CD8-positive, alpha-beta T cell (primary cell): ENCODE measurements at regions of chr7 and their contacts with region 1.

Region 1: GRCh38 chr7:696812-697551 is 29.5 kb upstream of the DNAAF5 start:
- DNase-seq: no peak
- ATAC-seq: no peak
- H3K4me3 ChIP-seq: no peak overlapping the region
- H3K4me3 Mint-ChIP-seq: no peak overlapping the region
- H3K27ac ChIP-seq: no peak overlapping the region
- H3K27ac Mint-ChIP-seq: no peak overlapping the region
- H3K4me1 ChIP-seq: no peaks in the 10 kb centered on the region
- H3K4me1 Mint-ChIP-seq: peaks cover 7% of the 10 kb centered on the region
- H3K27me3 ChIP-seq: no peaks in the 10 kb centered on the region
- H3K27me3 Mint-ChIP-seq: no peaks in the 10 kb centered on the region
- CTCF ChIP-seq: no peak

Region 2: DNA sequence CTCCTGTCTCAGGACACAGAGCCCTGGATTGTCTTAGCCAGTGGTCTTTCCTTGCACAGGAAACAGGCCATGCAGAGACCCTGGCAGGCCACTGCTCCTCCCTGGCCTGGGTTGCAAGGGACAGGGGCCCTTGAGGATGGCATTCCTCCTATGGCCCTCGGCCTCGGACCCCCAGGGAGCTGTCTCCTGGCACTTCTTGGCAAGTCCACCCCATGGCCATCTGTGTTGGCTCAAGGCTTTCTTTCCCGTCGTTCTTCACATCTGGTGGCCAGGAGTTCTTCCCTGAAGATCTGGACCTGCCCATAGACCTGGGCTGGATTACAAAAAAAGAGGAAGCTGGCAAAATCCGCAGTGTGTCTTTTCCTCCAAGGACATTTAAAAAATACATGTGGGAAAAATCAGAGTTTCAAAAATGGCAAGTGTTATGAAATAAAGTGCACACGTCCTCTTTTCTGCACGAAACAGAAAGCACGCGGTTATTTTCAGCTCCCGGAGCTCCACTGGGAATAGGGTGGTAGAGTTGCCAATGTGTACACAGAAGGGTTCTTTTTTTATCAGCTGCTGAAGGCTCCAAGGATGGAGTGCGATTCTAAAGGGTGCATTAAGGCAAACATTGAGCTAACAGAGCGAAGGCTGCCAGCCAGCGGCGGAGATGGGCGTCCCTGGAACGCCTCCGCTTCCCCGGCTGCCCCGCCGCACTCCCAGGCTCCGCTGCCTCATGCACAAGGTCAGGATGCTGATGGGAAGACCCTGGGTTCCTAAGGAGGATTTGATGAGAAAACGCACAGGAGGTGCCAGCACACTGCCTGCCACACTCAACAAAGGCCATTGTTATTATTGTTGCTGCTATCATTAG is 567.4 kb before region 1 on chr7:
- CTCF ChIA-PET with region 1: no interaction called
- POLR2A ChIA-PET with region 1: no interaction called
- intact Hi-C with region 1: no loop called
- DNase-seq: no peak
- ATAC-seq: no peak
- H3K4me3 ChIP-seq: no peak overlapping the region
- H3K4me3 Mint-ChIP-seq: no peak overlapping the region
- H3K27ac ChIP-seq: no peak overlapping the region
- H3K27ac Mint-ChIP-seq: no peak overlapping the region
- H3K4me1 ChIP-seq: no peaks in the 10 kb centered on the region
- H3K4me1 Mint-ChIP-seq: no peaks in the 10 kb centered on the region
- H3K27me3 ChIP-seq: no peaks in the 10 kb centered on the region
- H3K27me3 Mint-ChIP-seq: peaks cover 4% of the 10 kb centered on the region
- CTCF ChIP-seq: no peak

Region 3: GRCh38 chr7:494261-494687 is 202.7 kb before region 1 on chr7:
- CTCF ChIA-PET with region 1: no interaction called
- POLR2A ChIA-PET with region 1: no interaction called
- intact Hi-C with region 1: no loop called
- DNase-seq: peak in 3 of 9 experiments; percentile 13 to 38 (median 36)
- ATAC-seq: no peak
- H3K4me3 ChIP-seq: no peak overlapping the region
- H3K4me3 Mint-ChIP-seq: no peak overlapping the region
- H3K27ac ChIP-seq: no peak overlapping the region
- H3K27ac Mint-ChIP-seq: no peak overlapping the region
- H3K4me1 ChIP-seq: peaks cover 5% of the 10 kb centered on the region
- H3K4me1 Mint-ChIP-seq: peaks cover 10% of the 10 kb centered on the region
- H3K27me3 ChIP-seq: no peaks in the 10 kb centered on the region
- H3K27me3 Mint-ChIP-seq: no peaks in the 10 kb centered on the region
- CTCF ChIP-seq: no peak

Region 4: DNA sequence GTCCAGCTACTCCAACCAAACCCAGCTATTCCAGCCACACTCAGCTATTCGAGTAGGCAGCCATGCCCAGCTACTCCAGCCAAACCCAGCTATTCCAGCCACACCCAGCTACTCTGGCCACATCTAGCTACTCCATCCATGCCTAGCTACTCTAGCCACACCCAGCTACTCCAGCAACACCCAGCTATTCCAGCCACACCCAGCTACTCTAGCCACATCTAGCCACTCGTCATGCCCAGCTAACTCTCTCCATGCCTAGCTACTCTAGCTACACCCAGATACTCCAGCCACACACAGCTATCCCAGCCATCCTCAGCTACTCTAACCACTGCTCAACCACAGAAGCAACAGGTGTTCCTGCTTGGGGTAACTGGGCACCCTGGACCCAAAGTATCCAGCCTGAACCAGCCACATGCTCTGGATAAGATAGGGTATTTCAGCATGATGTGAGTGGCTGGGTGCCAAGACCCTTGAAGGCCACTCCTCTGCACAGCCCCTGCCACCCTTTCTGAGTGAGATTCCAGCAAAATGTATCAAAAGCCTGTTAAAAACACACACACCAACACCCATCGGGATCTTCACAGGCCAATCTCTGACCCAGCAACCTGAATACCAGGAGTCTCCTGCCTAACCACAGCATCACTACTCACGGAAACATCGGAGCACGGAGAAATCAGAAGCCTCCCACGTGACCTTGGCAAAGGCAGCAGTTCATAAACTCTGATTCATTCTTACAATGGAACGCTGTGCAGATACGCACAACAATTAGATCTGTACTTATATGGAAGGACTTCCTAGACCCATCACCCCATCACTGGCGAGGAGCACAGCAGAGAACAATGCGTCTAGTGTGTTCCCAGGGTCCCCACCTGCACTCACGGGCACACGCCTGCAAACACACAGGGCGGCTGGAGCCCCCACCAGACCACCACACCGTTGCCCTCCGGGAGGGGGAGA is 22.2 kb before region 1 on chr7:
- CTCF ChIA-PET with region 1: interaction called, 3 read pairs
- POLR2A ChIA-PET with region 1: no interaction called
- intact Hi-C with region 1: loop called in 1 of 2 experiments (anchors 1 kb)
- DNase-seq: no peak
- ATAC-seq: no peak
- H3K4me3 ChIP-seq: no peak overlapping the region
- H3K4me3 Mint-ChIP-seq: no peak overlapping the region
- H3K27ac ChIP-seq: no peak overlapping the region
- H3K27ac Mint-ChIP-seq: no peak overlapping the region
- H3K4me1 ChIP-seq: no peaks in the 10 kb centered on the region
- H3K4me1 Mint-ChIP-seq: no peaks in the 10 kb centered on the region
- H3K27me3 ChIP-seq: no peaks in the 10 kb centered on the region
- H3K27me3 Mint-ChIP-seq: no peaks in the 10 kb centered on the region
- CTCF ChIP-seq: no peak

Region 5: GRCh38 chr7:1403638-1404459 is 706.9 kb after region 1 on chr7:
- CTCF ChIA-PET with region 1: no interaction called
- POLR2A ChIA-PET with region 1: no interaction called
- intact Hi-C with region 1: no loop called
- DNase-seq: no peak
- ATAC-seq: no peak
- H3K4me3 ChIP-seq: no peak overlapping the region
- H3K4me3 Mint-ChIP-seq: no peak overlapping the region
- H3K27ac ChIP-seq: no peak overlapping the region
- H3K27ac Mint-ChIP-seq: no peak overlapping the region
- H3K4me1 ChIP-seq: peaks cover 4% of the 10 kb centered on the region
- H3K4me1 Mint-ChIP-seq: peaks cover 5% of the 10 kb centered on the region
- H3K27me3 ChIP-seq: peaks cover 10 to 20% of the 10 kb centered on the region in 2 experiments
- H3K27me3 Mint-ChIP-seq: peaks cover 53% of the 10 kb centered on the region
- CTCF ChIP-seq: no peak